Ascending aorta (tissue), 2 donors: ENCODE measurements at regions of chr6 and their contacts with region 1.

Region 1: DNA sequence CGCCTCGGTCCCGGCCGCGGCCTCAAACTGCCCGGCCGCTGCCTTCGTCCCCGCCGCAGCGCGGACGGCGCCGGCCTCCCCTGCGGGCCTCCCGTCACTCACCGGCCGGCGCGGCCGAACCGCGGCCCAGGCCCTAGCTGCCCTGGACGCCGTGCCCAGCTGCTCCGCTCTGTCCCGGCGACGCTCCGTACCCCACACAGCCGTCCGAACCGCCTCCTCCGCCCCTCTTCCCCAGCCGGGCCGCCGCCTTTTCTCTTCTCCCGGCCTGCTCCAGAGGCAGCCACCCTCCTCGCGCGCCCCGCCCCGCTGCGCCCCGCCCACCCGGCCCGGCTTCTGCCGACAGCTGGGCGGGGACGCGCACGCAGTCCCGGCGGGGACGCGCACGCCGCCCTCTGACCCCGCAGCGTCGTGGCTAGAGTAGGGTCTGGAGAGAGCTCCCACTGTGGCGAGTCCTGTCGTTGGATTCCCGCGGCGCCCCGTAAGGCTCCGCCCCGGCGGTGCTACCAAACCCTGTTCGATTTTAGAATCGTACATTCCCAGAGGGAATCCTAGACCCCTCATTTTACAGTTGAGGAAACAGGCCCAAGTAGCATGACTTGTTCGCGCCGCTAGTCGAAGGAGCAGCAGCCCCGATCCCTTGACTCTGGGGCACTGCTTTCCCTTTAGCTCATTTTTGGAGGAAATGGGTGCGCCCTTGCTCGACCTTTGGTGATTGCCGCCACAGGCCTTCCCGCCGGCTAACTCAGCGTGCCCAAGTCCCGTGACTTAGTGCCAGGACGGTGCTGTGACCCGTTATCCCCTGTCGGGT is at the start of gene FBXO30:
- DNase-seq: peak; percentile 53 to 96
- H3K4me3 ChIP-seq: peak within 1 kb of the TSS; percentile 77 to 95
- H3K27ac ChIP-seq: peak within 1 kb of the TSS; percentile 92 to 94
- H3K4me1 ChIP-seq: peaks cover 0 to 32% of the 10 kb centered on the region in 2 donors
- H3K27me3 ChIP-seq: no peaks in the 10 kb centered on the region
- CTCF ChIP-seq: peak in 1 of 3 experiments; percentile 42
- total RNA-seq, gene FBXO30: 1.2 TPM

Region 2: DNA sequence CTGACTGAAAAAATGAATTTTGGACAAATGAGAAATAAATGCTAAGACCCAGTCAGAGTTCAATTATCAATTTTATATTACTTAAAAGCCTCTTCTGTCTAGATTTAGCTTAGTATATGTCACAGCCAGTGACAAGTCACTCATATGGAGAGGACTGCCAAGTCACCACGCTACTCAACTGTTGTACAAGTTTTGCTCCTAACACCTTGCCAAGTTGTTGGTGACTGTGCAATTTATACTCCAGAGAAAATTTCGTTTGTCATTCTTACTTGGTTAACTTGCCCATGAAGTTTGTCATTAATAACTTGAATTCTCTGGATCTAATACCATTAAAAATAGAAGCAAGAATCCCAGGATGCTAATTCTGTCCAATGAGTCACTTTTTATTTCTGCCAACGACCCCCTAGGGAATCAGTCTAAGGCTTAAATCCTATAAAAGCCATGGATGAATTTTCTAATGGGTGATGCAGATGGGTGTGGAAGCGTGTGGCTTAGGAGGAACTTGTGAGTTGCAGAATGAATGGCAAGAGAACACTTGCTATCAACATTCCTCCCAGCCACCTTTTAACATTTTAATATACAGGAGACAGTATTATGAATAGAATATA is 30.3 kb after region 1 on chr6:
- intact Hi-C with region 1: loop called (anchors 2 kb)
- DNase-seq: no peak
- H3K4me3 ChIP-seq: no peak overlapping the region
- H3K27ac ChIP-seq: no peak overlapping the region
- H3K4me1 ChIP-seq: peaks cover 0 to 13% of the 10 kb centered on the region in 2 donors
- H3K27me3 ChIP-seq: no peaks in the 10 kb centered on the region
- CTCF ChIP-seq: no peak

Region 3: DNA sequence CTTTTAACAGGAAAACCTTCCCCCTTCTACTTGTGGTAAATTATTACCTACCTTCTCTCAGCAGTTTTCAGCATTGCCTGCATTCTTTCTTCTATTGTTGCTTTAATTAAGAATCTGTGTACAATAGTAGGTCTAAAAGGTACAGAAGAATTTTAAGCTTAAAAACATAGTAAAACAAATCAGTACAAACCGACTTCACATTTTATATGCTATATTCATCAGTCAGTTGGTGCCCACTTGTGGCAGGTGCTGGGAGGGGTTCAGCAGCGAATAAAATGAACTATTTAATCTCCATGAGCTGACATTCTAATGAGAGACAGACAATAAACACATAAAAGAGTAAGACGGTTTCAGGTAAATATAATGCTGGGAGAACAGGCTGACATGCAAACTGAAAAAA is 73.3 kb after region 1 on chr6:
- intact Hi-C with region 1: loop called (anchors 5 kb)
- DNase-seq: no peak
- H3K4me3 ChIP-seq: no peak overlapping the region
- H3K27ac ChIP-seq: no peak overlapping the region
- H3K4me1 ChIP-seq: no peaks in the 10 kb centered on the region
- H3K27me3 ChIP-seq: no peaks in the 10 kb centered on the region
- CTCF ChIP-seq: peak in 2 of 3 experiments; percentile 56 to 57

Region 4: GRCh38 chr6:145963216-145964068 is 148.7 kb after region 1 on chr6:
- intact Hi-C with region 1: loop called (anchors 1 kb)
- DNase-seq: peak in 1 of 2 donors; percentile 69
- H3K4me3 ChIP-seq: peak overlapping the region; percentile 82 to 92
- H3K27ac ChIP-seq: peak overlapping the region; percentile 84 to 86
- H3K4me1 ChIP-seq: peaks cover 0 to 16% of the 10 kb centered on the region in 2 donors
- H3K27me3 ChIP-seq: no peaks in the 10 kb centered on the region
- CTCF ChIP-seq: no peak

Region 5: GRCh38 chr6:146445233-146445632 is 630.5 kb after region 1 on chr6:
- intact Hi-C with region 1: no loop called
- DNase-seq: no peak
- H3K4me3 ChIP-seq: no peak overlapping the region
- H3K27ac ChIP-seq: no peak overlapping the region
- H3K4me1 ChIP-seq: no peaks in the 10 kb centered on the region
- H3K27me3 ChIP-seq: no peaks in the 10 kb centered on the region
- CTCF ChIP-seq: no peak

Region 6: GRCh38 chr6:146543211-146543939 is 728.7 kb after region 1 on chr6 and contains the start of gene RAB32:
- intact Hi-C with region 1: loop called (anchors 5 kb)
- DNase-seq: peak; percentile 82 to 97
- H3K4me3 ChIP-seq: peak within 1 kb of the TSS; percentile 91 to 94
- H3K27ac ChIP-seq: peak within 1 kb of the TSS; percentile 97 to 99
- H3K4me1 ChIP-seq: peaks cover 4 to 27% of the 10 kb centered on the region in 2 donors
- H3K27me3 ChIP-seq: no peaks in the 10 kb centered on the region
- CTCF ChIP-seq: peak; percentile 79 to 85 (median 79)
- total RNA-seq, gene RAB32: 89.2 TPM